Right ventricle myocardium inferior (tissue), 1 donor: ENCODE measurements at regions of chr11 and their contacts with region 1.

Region 1: DNA sequence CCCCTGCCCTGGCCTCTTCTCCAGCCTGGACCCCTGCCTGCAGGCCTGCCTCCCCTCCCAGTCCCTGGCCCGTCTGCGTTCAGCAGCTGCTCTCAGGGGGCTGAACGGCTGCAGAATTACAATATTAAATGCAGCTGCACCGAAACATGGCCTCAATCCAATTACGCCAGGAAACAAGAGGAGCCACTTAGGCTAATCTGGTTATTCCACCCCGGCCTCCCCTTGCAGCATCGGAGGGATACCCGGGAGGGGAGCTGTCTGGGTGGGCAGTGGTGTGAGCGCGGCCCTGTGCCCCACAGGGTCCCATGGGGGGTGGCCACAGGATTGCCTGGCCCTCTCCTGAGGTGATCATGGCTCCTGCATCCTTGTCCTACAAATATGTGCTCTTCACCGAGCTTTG is 42.6 kb downstream of the FLRT1 start:
- DNase-seq: no peak
- ATAC-seq: peak; percentile 40

Region 2: DNA sequence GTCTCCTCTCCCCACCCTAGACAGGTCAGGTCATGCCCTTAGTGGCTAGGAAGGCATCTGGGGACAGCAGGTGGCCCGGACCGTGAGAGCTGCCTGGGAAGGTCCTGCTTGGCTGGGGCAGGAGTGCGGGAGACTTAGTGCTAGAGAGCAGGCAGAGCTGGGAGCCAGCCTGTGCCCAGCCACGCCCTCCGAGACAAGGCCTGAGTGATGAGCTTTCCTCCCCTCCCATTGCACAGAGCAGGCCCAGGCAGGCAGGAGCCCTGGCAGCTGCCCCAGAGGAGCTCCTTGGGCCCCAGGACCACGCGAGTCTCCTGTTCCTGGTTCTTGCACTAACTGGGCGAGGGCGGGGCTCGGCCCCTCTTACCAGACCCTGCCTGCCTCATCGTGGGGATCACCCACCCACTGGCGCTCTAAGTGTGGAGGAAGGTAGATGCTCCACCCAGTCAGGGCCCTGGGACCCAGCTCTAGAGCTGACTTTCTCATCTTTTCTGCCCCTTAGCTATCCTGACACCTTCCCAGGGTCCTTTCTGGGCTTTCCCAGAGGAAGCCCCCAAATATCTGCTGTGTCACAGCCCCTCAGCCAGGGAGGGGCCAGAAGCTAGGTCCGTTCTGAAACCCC is 42.8 kb after region 1 on chr11:
- intact Hi-C with region 1: loop called (anchors 5 kb)
- DNase-seq: no peak
- ATAC-seq: peak; percentile 63